ENCODE measurements at regions of chr17 and their contacts with region 1.

Region 1: GRCh38 chr17:43766413-43767052 is 7.9 kb upstream of the SOST start:
- DNase-seq: peak; percentile 71
- ATAC-seq: no peak
- H3K4me3 Mint-ChIP-seq: no peak overlapping the region
- H3K27ac Mint-ChIP-seq: no peak overlapping the region
- H3K4me1 Mint-ChIP-seq: no peaks in the 10 kb centered on the region
- H3K27me3 Mint-ChIP-seq: no peaks in the 10 kb centered on the region
- CTCF ChIP-seq: peak; percentile 89

Region 2: GRCh38 chr17:43599835-43600234 is 166.7 kb before region 1 on chr17:
- CTCF ChIA-PET with region 1: no interaction called
- POLR2A ChIA-PET with region 1: no interaction called
- intact Hi-C with region 1: no loop called
- DNase-seq: no peak
- ATAC-seq: no peak
- H3K4me3 Mint-ChIP-seq: no peak overlapping the region
- H3K27ac Mint-ChIP-seq: no peak overlapping the region
- H3K4me1 Mint-ChIP-seq: no peaks in the 10 kb centered on the region
- H3K27me3 Mint-ChIP-seq: no peaks in the 10 kb centered on the region
- CTCF ChIP-seq: no peak

Region 3: DNA sequence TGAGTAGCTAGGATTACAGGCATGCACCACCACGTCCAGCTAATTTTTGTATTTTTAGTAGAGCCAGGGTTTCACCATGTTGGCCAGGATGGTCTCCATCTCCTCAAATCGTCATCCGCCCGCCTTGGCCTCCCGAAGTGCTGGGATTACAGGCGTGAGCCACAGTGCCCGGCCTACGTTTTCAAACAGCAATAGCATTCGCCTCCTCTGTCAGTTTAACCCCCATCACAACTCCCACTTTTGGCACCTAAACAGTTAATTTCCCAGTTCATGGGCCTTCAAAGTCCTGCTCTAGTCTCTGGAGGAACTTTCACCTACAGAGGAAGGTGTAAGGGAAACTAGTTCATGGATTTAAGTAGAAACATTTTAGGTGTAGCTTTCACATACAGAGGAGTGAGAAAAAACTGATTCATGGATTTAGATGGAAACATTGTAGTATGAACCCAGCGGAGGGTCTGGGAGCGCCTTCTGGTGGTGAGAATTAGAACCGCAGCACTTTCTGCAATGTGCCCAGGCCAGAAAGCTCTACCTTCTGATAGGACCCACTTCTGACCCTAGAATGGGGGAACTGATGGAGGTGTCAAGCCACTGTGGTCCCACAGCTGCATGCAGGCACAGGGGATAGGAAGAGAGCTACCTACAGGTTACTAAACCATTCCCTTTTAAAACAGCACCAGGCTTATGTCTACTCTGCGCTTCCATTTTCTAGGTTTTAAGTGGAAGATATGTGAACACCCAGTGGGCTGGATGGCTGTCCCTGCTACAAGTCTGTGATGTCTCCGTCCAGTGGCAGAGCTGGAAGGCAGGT is 92.8 kb before region 1 on chr17:
- CTCF ChIA-PET with region 1: interaction called, 14 read pairs
- POLR2A ChIA-PET with region 1: no interaction called
- intact Hi-C with region 1: no loop called
- DNase-seq: peak; percentile 88
- ATAC-seq: peak; percentile 75
- H3K4me3 Mint-ChIP-seq: no peak overlapping the region
- H3K27ac Mint-ChIP-seq: no peak overlapping the region
- H3K4me1 Mint-ChIP-seq: peaks cover 11% of the 10 kb centered on the region
- H3K27me3 Mint-ChIP-seq: peaks cover 3% of the 10 kb centered on the region
- CTCF ChIP-seq: peak; percentile 97

Region 4: GRCh38 chr17:43720311-43721060 is 46.0 kb before region 1 on chr17:
- CTCF ChIA-PET with region 1: interaction called, 22 read pairs
- POLR2A ChIA-PET with region 1: no interaction called
- intact Hi-C with region 1: no loop called
- DNase-seq: peak; percentile 83
- ATAC-seq: peak; percentile 93
- H3K4me3 Mint-ChIP-seq: peak overlapping the region; percentile 87
- H3K27ac Mint-ChIP-seq: peak overlapping the region; percentile 97
- H3K4me1 Mint-ChIP-seq: peaks cover 15% of the 10 kb centered on the region
- H3K27me3 Mint-ChIP-seq: peaks cover 5% of the 10 kb centered on the region
- CTCF ChIP-seq: no peak

Region 5: GRCh38 chr17:43800736-43801135 is 34.2 kb after region 1 on chr17:
- CTCF ChIA-PET with region 1: interaction called, 13 read pairs
- POLR2A ChIA-PET with region 1: no interaction called
- intact Hi-C with region 1: no loop called
- DNase-seq: no peak
- ATAC-seq: no peak
- H3K4me3 Mint-ChIP-seq: no peak overlapping the region
- H3K27ac Mint-ChIP-seq: no peak overlapping the region
- H3K4me1 Mint-ChIP-seq: peaks cover 2% of the 10 kb centered on the region
- H3K27me3 Mint-ChIP-seq: peaks cover 25% of the 10 kb centered on the region
- CTCF ChIP-seq: no peak